MCF 10A (cell line): ENCODE measurements at regions of chr1 and their contacts with region 1.

Region 1: GRCh38 chr1:154669464-154670282 is 61.7 kb upstream of the ADAR start:
- DNase-seq: peak; percentile 88
- H3K4me3 Mint-ChIP-seq: no peak overlapping the region
- H3K27ac Mint-ChIP-seq: no peak overlapping the region
- H3K4me1 Mint-ChIP-seq: no peaks in the 10 kb centered on the region
- H3K27me3 Mint-ChIP-seq: peaks cover 19% of the 10 kb centered on the region
- CTCF ChIP-seq: peak; percentile 96

Region 2: GRCh38 chr1:153880024-153880423 is 789.6 kb before region 1 on chr1:
- CTCF ChIA-PET with region 1: no interaction called
- POLR2A ChIA-PET with region 1: no interaction called
- intact Hi-C with region 1: no loop called
- DNase-seq: no peak
- H3K4me3 Mint-ChIP-seq: no peak overlapping the region
- H3K27ac Mint-ChIP-seq: no peak overlapping the region
- H3K4me1 Mint-ChIP-seq: peaks cover 8% of the 10 kb centered on the region
- H3K27me3 Mint-ChIP-seq: no peaks in the 10 kb centered on the region
- CTCF ChIP-seq: no peak

Region 3: DNA sequence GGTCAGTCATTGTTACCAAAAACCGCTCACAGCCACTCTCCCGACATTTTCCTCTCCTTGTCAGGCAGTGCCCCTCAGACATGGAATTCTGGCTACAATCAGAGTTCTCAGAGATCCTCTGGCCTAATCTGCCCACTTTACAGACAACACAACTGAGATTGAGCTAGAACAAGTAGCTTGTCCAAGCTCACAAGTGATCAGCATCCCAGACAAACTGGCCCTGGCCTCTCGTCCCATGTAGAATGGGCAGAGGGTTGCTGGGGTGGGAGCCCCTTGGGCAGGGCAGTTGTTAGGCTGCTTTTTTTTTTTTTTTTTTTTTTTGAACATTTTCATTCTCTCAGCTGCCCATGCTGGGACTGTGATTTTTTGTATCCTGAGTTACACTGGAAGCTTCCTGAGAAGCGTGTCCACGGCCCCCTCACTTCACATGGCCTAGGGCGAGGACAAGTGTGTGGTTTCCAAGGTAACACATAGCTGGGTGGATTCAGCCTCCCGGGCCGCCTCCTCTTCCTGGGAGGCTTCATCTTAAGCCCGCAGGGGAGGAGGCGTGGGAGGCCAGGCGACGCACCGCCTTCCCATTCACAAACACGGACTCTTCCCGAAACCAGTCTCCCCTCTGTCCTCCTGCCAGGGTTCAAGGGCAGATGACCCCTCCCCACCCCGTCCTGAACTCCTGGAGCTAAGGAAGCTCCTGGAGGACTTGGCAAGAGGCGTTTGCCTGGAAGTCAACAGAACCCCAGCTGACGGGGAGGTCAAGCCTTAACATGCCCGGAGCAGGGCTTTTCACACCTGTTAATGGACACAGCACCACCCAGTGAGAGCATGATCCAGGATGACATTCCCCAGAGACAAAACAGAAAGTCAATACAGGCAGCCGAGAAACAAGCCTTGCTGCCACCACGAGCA is 143.5 kb after region 1 on chr1:
- CTCF ChIA-PET with region 1: interaction called, 10 read pairs
- POLR2A ChIA-PET with region 1: no interaction called
- intact Hi-C with region 1: loop called (anchors 1 kb)
- DNase-seq: peak; percentile 94
- H3K4me3 Mint-ChIP-seq: peak overlapping the region; percentile 2
- H3K27ac Mint-ChIP-seq: peak overlapping the region; percentile 86
- H3K4me1 Mint-ChIP-seq: peaks cover 25% of the 10 kb centered on the region
- H3K27me3 Mint-ChIP-seq: peaks cover 5% of the 10 kb centered on the region
- CTCF ChIP-seq: no peak

Region 4: GRCh38 chr1:154863315-154864174 is 193.9 kb after region 1 on chr1:
- CTCF ChIA-PET with region 1: interaction called, 15 read pairs
- POLR2A ChIA-PET with region 1: no interaction called
- intact Hi-C with region 1: no loop called
- DNase-seq: peak; percentile 75
- H3K4me3 Mint-ChIP-seq: no peak overlapping the region
- H3K27ac Mint-ChIP-seq: no peak overlapping the region
- H3K4me1 Mint-ChIP-seq: peaks cover 17% of the 10 kb centered on the region
- H3K27me3 Mint-ChIP-seq: peaks cover 51% of the 10 kb centered on the region
- CTCF ChIP-seq: peak; percentile 73

Region 5: DNA sequence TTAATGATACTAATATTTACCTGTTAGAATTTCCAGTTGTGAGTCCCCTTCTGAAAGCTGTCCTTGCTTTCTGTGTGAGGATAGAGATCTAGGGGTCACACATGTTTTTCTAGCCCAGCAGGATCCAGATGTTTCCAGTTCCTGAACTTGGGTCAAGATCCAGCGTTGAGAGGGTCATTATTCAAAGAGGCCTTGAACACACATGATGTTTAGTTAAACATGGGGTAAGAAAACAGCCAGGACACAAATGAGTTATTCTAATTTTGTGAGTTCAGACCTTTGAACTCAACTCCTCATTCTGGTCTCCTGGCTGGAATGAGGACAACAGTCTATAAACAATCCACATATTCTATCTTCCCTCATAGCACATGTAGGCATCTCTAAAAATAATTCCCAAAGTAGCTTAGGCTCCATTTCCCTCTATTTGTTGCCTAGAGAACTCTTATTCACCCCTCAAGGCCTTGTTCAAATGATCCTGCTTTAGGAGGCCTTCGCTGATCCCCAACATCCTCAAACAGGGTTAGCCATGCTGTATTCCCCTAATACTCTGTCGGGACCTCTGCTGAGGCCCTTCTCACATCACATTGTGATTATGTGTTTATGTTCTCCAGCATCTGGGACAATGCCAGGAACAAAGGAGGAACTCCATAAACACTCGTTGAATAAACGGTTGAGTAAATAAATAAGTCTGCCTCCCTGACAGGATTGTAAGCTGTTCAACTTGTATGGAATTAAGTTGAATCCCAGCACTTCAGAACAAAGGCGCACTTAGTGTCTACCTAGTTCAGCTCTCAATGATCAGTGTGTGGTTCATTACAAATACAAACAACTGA is 215.4 kb after region 1 on chr1:
- CTCF ChIA-PET with region 1: interaction called, 41 read pairs
- POLR2A ChIA-PET with region 1: no interaction called
- intact Hi-C with region 1: no loop called
- DNase-seq: no peak
- H3K4me3 Mint-ChIP-seq: no peak overlapping the region
- H3K27ac Mint-ChIP-seq: no peak overlapping the region
- H3K4me1 Mint-ChIP-seq: peaks cover 7% of the 10 kb centered on the region
- H3K27me3 Mint-ChIP-seq: peaks cover 45% of the 10 kb centered on the region
- CTCF ChIP-seq: no peak

Region 6: DNA sequence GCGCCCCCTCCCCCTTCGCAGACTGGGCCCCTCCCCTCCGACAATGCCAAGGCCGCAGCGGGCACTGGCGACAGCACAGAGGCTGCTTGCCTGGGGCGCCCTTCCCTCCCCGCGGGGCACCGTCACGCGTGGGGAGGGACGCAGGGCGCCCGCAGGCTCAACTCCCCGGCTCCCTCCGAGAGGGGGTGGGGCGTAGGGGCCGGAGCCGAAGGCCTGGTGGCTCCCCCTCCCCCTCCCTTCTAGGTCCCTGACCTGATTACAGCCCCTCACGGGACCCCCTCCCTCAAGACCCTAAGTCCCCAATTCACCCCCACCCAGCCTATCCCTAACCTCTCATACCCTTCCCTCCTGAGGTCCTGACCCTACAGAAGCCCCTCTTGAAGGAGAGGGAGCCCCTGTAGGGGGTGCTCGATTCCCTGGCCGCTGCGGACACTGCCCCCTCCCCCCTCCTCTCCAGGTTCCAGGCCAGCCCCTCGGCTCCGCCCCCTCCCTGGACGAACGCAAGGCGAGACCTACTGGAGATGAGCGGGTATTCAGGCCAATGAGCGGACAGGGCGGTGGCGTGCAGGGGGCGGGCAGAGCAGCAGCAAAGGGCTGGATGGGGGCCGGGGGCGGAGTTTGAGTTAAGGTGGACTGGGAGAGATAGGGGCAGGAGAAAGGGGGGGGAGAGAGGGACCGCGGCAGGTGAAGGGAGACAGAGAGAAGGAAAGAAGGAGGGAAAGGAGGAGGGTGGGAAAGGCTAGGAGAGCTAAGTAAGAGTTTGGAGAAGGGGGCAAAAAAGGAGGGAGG is 332.2 kb after region 1 on chr1:
- CTCF ChIA-PET with region 1: no interaction called
- POLR2A ChIA-PET with region 1: interaction called, 3 read pairs
- intact Hi-C with region 1: loop called (anchors 1 kb)
- DNase-seq: peak; percentile 100
- H3K4me3 Mint-ChIP-seq: peak overlapping the region; percentile 90
- H3K27ac Mint-ChIP-seq: peak overlapping the region; percentile 97
- H3K4me1 Mint-ChIP-seq: peaks cover 52% of the 10 kb centered on the region
- H3K27me3 Mint-ChIP-seq: no peaks in the 10 kb centered on the region
- CTCF ChIP-seq: peak; percentile 34